ENCODE measurements at regions of chr1 and their contacts with region 1.

Region 1: DNA sequence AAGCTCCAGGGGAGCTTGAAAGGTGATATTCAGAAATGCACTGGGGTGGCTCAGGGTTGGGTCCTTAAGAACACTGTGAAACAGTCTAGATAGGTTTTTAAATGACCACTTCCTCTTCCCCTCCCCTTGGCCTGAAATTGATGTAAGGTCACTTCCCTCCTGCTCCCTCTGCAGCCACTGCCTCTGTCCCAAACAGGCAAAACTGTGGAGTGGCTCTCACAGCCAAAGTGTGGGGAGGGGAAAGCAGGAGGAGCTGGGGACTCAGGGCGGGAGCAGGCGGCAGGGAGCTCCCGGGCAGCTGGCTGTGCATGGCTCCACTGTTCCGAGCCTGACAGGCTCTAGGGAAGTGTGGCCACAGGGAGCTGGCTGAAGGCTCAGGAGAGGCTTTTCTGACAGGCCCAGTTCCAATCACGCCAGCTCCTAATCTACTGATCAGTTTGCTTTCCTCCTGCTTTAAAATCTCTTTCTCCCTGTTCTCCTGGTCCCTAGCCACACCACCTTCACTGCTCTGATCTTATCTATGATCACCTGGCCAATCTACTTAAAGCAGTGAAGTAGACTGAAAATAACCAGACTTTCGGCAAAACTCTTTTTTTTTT is 5.1 kb upstream of the CSRP1 start:
- DNase-seq: no peak
- ATAC-seq: no peak
- H3K4me3 Mint-ChIP-seq: no peak overlapping the region
- H3K27ac Mint-ChIP-seq: no peak overlapping the region
- H3K4me1 Mint-ChIP-seq: peaks cover 48% of the 10 kb centered on the region
- H3K27me3 Mint-ChIP-seq: no peaks in the 10 kb centered on the region

Region 2: GRCh38 chr1:201254625-201255506 is 257.2 kb before region 1 on chr1:
- CTCF ChIA-PET with region 1: no interaction called
- DNase-seq: peak; percentile 69
- ATAC-seq: peak; percentile 72
- H3K4me3 Mint-ChIP-seq: no peak overlapping the region
- H3K27ac Mint-ChIP-seq: no peak overlapping the region
- H3K4me1 Mint-ChIP-seq: no peaks in the 10 kb centered on the region
- H3K27me3 Mint-ChIP-seq: no peaks in the 10 kb centered on the region

Region 3: GRCh38 chr1:201436393-201436792 is 75.6 kb before region 1 on chr1:
- CTCF ChIA-PET with region 1: interaction called, 45 read pairs
- DNase-seq: no peak
- ATAC-seq: no peak
- H3K4me3 Mint-ChIP-seq: no peak overlapping the region
- H3K27ac Mint-ChIP-seq: no peak overlapping the region
- H3K4me1 Mint-ChIP-seq: peaks cover 5% of the 10 kb centered on the region
- H3K27me3 Mint-ChIP-seq: peaks cover 35% of the 10 kb centered on the region

Region 4: GRCh38 chr1:201456499-201457309 is 55.3 kb before region 1 on chr1:
- CTCF ChIA-PET with region 1: interaction called, 29 read pairs
- DNase-seq: no peak
- ATAC-seq: no peak
- H3K4me3 Mint-ChIP-seq: no peak overlapping the region
- H3K27ac Mint-ChIP-seq: no peak overlapping the region
- H3K4me1 Mint-ChIP-seq: peaks cover 24% of the 10 kb centered on the region
- H3K27me3 Mint-ChIP-seq: peaks cover 32% of the 10 kb centered on the region

Region 5: DNA sequence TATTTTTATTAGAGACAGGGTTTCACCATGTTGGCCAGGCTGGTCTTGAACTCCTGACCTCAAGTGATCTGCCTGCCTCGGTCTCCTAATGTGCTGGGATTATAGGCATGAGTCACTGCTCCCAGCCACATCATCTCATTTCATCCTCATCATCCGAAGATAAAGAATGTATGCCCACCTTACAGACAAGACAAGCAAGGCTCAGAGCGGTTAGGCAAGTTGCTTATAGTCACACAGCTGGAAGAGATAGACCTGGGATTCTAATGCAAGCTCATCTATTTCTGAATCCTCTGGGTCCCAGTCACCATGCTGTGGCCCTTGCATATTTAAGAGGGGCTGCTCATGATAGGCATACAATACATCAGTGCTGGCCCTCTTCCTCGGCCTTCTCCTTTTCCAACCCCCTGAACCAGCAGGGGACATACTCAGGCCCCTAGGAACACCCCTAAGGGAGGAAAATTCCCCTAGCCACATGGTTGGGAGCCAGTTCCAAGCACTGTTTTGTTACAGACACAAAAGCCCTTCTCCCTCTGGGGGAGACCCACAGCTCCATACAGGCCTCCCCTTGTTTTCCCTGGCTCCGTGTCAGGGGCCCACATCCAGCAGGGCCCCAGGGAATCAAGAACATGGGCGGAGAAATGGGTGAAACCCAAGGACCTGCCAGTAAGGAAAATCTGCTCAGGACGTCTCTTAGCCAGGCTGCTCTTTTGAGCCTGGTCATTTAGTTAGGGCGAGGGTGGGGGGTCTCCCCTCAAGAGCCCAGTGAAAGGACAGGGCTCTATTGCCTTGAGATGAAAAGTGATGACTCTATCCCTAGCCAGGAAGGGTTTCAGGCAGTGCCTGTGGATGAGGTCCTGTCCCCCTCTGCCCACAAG is 12.0 kb before region 1 on chr1:
- CTCF ChIA-PET with region 1: interaction called, 597 read pairs
- DNase-seq: no peak
- ATAC-seq: no peak
- H3K4me3 Mint-ChIP-seq: no peak overlapping the region
- H3K27ac Mint-ChIP-seq: no peak overlapping the region
- H3K4me1 Mint-ChIP-seq: peaks cover 18% of the 10 kb centered on the region
- H3K27me3 Mint-ChIP-seq: no peaks in the 10 kb centered on the region

Region 6: GRCh38 chr1:201538612-201539551 is 26.8 kb after region 1 on chr1 and contains the start of gene NAV1:
- CTCF ChIA-PET with region 1: interaction called, 16 read pairs
- DNase-seq: no peak
- ATAC-seq: peak; percentile 42
- H3K4me3 Mint-ChIP-seq: peak within 1 kb of the TSS; percentile 27
- H3K27ac Mint-ChIP-seq: no peak within 1 kb of the TSS
- H3K4me1 Mint-ChIP-seq: peaks cover 21% of the 10 kb centered on the region
- H3K27me3 Mint-ChIP-seq: peaks cover 75% of the 10 kb centered on the region
- total RNA-seq, gene NAV1: 1.4 to 2.8 TPM

Measured in activated CD8-positive, alpha-beta memory T cell treated with anti-CD3 and anti-CD28 coated beads, Interleukin-2, amount 10 ng/mL, durations not matched to agents 7 days and 5 days (primary cell).